Breast epithelium (tissue), 4 donors: ENCODE measurements at regions of chr11 and their contacts with region 1.

Region 1: DNA sequence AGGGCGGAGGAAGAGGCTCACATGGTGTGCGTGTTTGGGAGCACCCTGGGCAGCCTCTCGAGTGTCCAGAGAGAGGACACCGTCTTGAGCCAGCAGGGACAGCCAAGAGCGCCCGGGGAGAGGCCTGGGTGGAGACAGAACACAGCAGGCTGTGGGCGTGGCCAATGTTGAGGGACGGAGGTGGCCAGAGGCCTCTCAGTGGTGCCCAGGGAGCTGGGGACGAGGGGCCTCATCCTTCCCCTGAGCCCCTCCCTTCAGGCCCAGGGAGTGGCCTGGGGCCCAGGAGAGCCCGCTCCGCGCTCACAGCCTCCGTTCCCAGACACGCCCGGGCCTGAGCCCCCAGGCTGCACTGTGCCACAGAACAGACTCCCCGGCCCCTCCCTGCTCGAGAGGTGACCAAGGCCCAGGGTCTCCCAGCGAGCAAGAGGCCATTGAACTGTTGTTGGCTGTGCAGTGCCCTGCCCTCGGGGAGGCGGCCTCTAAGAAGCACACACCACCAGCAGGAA is 48.4 kb downstream of the CDKN1C start:
- DNase-seq: peak in 1 of 2 donors; percentile 54
- H3K4me3 ChIP-seq: no peak overlapping the region
- H3K27ac ChIP-seq: no peak overlapping the region
- H3K4me1 ChIP-seq: peaks cover 0 to 7% of the 10 kb centered on the region in 2 donors
- H3K27me3 ChIP-seq: no peaks in the 10 kb centered on the region
- CTCF ChIP-seq: no peak
- POLR2A ChIP-seq: no peak

Region 2: DNA sequence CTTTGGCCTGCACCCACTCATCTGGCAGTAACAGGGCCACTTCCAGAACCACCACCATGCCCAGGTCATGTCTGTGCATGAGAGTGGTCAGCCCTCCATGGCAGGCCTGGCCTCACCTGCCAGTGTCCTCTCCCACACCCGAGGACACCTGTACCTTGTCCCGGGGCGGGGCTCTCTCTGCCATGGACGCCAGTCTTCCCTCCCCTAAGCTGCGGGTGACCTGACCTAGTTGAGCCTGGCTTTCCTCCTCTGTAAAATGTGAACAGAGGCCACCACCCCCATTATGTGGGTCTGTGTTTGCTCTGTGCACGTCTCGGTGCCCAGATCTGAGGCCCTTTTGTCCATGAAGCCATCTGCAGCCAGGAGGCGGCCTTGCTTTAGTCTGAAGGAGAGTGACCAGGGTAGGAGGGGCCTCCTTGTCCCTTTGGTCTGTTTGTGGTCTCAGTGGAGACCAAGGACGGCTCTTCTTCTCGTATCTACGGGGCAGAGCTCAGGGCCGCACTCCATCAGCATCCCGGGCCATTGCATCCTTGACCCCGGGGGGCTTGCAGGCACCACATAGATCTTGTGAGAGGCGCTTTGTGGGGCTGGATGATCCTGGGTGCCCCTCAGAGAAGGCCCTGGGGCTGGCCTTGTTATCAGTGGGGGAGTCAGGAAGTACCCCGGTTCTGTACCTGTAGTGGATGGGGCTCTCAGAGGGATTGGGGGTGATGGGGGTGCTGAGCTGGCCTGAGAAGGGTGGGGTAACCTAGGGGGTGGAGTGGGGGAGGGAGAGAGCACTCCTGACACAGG is 270.7 kb before region 1 on chr11:
- intact Hi-C with region 1: no loop called
- DNase-seq: no peak
- H3K4me3 ChIP-seq: no peak overlapping the region
- H3K27ac ChIP-seq: no peak overlapping the region
- H3K4me1 ChIP-seq: no peaks in the 10 kb centered on the region
- H3K27me3 ChIP-seq: no peaks in the 10 kb centered on the region
- CTCF ChIP-seq: no peak
- POLR2A ChIP-seq: no peak

Region 3: DNA sequence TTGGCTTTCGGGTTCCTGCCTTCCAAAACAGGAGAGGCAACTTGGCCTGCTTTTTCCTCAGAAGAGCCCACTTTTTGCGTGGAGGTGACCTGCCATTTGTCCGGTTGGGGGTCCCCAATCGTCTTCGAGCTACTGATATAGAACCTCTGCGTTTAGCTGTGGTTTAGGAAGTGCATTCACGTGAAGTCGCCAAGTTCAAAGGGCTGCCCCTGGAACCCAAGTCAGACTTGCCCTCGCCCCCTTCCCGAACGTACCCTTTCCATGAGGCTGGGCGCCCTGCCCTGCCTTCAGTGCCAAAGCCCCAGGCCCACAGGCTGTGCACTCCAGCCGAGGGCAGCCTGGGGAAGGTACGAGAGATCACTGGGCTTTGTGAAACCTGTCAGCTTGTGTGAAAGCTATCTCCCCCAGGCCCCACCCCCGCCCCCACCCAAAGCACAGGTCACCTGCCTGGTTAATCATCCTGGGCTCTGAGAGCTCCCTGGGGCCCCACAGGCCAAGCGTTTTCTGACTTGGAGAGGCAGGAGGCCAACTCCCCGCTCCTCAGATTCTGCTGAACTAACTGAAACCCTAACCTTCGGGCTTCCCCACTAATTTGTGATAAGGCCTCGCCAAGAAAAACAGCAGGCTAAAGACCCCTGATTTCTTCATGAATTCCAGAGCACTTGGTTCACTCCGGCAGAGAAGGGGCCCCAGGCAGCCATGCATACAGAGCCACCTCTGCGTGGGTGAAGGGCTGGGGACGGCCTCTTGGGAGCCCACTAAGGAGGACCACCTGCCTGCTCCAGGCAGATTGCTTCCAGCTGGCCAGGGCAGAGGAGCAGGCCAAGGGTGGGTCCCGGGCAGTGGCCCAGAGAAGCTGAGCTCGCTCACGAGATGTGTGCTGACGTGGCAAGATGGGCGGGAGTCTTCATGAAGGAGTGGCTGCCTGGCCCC is 111.5 kb before region 1 on chr11:
- intact Hi-C with region 1: loop called (anchors 10 kb)
- DNase-seq: no peak
- H3K4me3 ChIP-seq: no peak overlapping the region
- H3K27ac ChIP-seq: peak overlapping the region; percentile 10 to 63
- H3K4me1 ChIP-seq: no peaks in the 10 kb centered on the region
- H3K27me3 ChIP-seq: no peaks in the 10 kb centered on the region
- CTCF ChIP-seq: no peak
- POLR2A ChIP-seq: no peak